Calu3 (cell line): ENCODE measurements at regions of chr2 and their contacts with region 1.

Region 1: DNA sequence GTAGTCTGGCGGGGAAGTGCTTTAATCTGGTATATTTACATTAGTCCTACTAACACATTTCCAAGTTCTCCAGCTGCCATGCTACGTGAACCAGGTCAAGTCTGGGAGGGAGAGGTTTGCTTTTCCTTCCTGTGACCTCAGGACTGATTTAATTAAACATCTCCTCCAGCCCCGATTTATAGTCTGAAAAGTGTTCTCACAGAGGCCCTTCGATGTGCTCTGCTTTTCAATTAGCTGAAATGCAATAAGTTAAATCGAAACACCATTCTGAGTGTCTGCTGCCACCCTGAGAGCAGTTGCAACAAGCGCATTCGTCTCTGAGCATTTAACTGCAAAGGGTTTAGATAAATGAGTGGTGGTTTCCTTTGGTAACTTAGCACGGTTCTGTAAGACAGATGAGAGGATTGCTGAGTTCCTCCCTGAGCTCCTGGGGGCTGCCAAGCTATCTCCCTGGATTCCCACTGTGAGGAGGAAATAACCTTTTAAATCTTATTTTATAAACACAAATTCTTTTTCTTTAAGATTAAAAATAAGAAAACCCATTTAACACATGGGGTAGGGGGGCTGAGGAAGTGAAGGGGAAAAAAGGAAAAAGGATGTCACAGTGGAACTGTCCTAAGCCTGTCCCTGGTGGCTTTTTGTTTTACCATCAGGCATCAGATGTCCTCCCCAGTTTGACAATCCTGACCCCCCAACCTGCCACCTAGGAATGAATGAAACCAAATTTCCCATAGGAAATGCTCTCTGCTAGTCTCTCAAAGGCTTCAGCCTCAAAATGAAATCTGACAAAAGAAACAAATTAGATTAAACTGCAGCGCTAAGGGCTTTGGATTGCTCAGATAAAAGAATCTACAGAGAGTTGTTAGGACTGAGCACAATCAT is 56.5 kb upstream of the CREB1 start:
- DNase-seq: no peak
- H3K4me3 Mint-ChIP-seq: no peak overlapping the region
- H3K27ac Mint-ChIP-seq: no peak overlapping the region
- H3K4me1 Mint-ChIP-seq: peaks cover 14% of the 10 kb centered on the region
- H3K27me3 Mint-ChIP-seq: no peaks in the 10 kb centered on the region
- CTCF ChIP-seq: peak; percentile 20

Region 2: GRCh38 chr2:206693399-206694137 is 779.7 kb before region 1 on chr2:
- CTCF ChIA-PET with region 1: no interaction called
- intact Hi-C with region 1: loop called (anchors 5 kb)
- DNase-seq: peak; percentile 58
- H3K4me3 Mint-ChIP-seq: no peak overlapping the region
- H3K27ac Mint-ChIP-seq: no peak overlapping the region
- H3K4me1 Mint-ChIP-seq: no peaks in the 10 kb centered on the region
- H3K27me3 Mint-ChIP-seq: peaks cover 11% of the 10 kb centered on the region
- CTCF ChIP-seq: peak; percentile 70

Region 3: GRCh38 chr2:206800506-206801417 is 672.5 kb before region 1 on chr2:
- CTCF ChIA-PET with region 1: interaction called, 4 read pairs
- intact Hi-C with region 1: loop called (anchors 1 kb)
- DNase-seq: peak; percentile 64
- H3K4me3 Mint-ChIP-seq: no peak overlapping the region
- H3K27ac Mint-ChIP-seq: no peak overlapping the region
- H3K4me1 Mint-ChIP-seq: no peaks in the 10 kb centered on the region
- H3K27me3 Mint-ChIP-seq: no peaks in the 10 kb centered on the region
- CTCF ChIP-seq: peak; percentile 62

Region 4: DNA sequence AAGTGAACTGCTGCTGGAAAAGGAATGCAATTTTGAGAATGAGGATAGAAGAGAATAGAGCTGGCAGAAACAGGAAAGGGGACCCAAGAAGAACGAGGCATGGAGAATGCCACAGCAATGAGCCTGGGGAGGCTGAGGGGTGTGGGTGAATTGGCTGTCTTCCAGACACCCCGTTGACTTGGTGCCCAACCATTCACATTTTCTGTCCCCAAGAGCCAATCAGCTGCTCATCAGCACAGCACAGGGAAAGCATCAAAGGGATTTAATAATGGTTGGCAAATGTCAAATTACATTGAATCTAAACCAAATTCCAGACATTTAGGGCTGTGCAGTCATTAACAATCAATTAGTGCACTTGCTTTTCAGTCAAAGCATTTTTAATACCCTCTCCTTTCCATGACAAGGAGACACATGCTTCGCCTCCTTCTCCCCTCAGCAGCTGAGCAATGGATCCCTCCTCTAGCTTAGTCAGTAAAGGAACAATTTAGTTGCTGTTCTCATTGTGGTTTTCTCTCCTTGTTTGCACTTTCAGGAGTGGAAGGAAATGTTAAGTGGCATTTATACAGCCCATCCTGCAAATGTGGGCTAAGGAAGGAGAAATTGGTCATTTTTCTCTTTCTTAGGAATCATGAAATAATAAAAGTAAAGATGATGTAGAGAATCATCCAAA is 406.4 kb before region 1 on chr2:
- CTCF ChIA-PET with region 1: no interaction called
- intact Hi-C with region 1: loop called (anchors 10 kb)
- DNase-seq: no peak
- H3K4me3 Mint-ChIP-seq: no peak overlapping the region
- H3K27ac Mint-ChIP-seq: no peak overlapping the region
- H3K4me1 Mint-ChIP-seq: no peaks in the 10 kb centered on the region
- H3K27me3 Mint-ChIP-seq: no peaks in the 10 kb centered on the region
- CTCF ChIP-seq: no peak